ENCODE measurements at regions of chr7 and their contacts with region 1.

Region 1: GRCh38 chr7:6729492-6730342 is 23.0 kb upstream of the ZNF12 start:
- DNase-seq: peak; percentile 75
- ATAC-seq: peak; percentile 88
- H3K4me3 Mint-ChIP-seq: peak overlapping the region; percentile 88
- H3K27ac Mint-ChIP-seq: peak overlapping the region; percentile 78
- H3K4me1 Mint-ChIP-seq: peaks cover 40% of the 10 kb centered on the region
- H3K27me3 Mint-ChIP-seq: no peaks in the 10 kb centered on the region
- CTCF ChIP-seq: no peak

Region 2: GRCh38 chr7:5541087-5541992 is 1188.4 kb before region 1 on chr7:
- CTCF ChIA-PET with region 1: no interaction called
- POLR2A ChIA-PET with region 1: no interaction called
- intact Hi-C with region 1: no loop called
- DNase-seq: peak; percentile 50
- ATAC-seq: peak; percentile 73
- H3K4me3 Mint-ChIP-seq: peak overlapping the region; percentile 68
- H3K27ac Mint-ChIP-seq: peak overlapping the region; percentile 86
- H3K4me1 Mint-ChIP-seq: peaks cover 30% of the 10 kb centered on the region
- H3K27me3 Mint-ChIP-seq: no peaks in the 10 kb centered on the region
- CTCF ChIP-seq: no peak

Region 3: DNA sequence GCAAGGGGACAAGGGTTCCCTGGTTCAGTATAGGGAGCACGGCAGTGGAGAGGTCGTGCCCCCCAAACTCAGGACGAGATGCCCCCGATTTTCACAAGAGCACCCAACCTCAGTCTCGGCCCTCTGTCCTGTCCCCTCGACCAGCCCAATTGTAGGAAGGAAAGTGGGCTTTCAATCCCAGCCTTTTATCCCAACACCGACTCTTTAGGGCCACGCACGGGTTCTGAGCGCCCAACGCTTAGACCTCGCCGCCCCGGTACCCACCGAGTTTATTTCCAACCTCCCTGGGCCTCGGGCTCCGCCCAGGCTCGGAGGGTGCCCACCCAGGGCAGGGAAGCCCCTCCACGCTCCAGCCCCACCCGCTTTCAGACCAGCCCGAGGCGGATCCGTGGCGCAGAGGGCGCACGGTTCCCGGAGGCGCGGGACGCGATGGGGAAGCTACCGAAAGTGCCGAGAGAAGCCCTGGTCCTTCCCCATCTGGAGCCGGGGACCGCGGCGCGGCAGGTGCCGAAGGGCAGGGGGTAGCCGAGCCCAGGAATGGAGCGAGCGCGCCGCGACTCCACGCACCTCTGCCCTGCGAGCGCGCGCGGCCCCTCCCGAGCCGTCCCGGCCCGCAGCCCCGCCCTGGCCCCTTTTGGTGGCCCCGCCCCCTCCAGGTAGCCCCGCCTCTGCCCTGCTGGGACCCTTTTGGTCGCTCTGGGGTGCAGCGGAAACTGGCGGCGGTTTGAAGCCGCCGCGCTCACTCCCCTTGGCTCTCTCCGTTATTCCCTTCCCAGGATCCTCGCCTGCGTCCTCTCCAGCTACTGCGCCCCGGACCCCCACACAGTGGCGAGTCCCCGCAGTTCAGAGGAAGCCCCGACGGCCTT is 198.9 kb before region 1 on chr7:
- CTCF ChIA-PET with region 1: no interaction called
- POLR2A ChIA-PET with region 1: no interaction called
- intact Hi-C with region 1: loop called (anchors 5 kb)
- DNase-seq: peak; percentile 71
- ATAC-seq: peak; percentile 90
- H3K4me3 Mint-ChIP-seq: peak overlapping the region; percentile 86
- H3K27ac Mint-ChIP-seq: peak overlapping the region; percentile 10
- H3K4me1 Mint-ChIP-seq: peaks cover 22% of the 10 kb centered on the region
- H3K27me3 Mint-ChIP-seq: peaks cover 19% of the 10 kb centered on the region
- CTCF ChIP-seq: no peak

Region 4: DNA sequence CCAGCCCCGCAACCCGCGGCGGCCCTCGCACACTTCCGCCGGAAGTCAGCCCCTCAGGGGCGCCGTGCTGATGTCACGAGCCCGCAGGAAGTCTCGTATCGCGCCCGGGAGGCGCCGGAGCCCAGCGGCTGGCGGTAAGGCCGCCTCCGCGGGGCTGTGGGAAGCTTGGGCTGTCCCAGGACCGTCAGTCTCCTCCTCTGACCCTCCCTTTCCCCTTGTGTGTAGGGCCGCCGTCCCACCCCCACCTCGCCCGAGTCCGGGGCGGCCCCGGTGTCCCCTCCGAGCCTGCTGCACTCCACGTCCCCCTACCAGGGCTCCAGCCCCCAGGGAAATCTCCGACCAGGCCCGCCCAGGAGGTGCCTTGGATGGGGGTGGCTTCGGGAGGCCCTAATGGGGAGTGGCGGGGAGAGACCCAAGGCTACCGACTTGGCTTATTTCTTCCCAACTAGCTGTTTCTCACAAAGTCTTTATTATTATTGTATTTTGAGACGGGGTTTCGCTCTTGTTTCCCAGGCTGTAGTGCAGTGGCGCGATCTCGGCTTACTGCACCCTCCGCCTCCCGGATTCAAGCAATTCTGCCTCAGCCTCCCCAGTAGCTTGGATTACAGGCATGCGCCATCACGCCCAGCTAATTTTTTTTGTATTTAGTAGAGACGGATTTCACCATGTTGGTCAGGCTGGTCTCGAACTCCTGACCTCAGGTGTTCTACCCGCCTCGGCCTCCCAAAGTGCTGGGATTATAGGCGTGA is 152.2 kb before region 1 on chr7 and contains the start of gene ZDHHC4:
- CTCF ChIA-PET with region 1: no interaction called
- POLR2A ChIA-PET with region 1: no interaction called
- intact Hi-C with region 1: loop called (anchors 5 kb)
- DNase-seq: peak; percentile 86
- ATAC-seq: peak; percentile 88
- H3K4me3 Mint-ChIP-seq: peak within 1 kb of the TSS; percentile 88
- H3K27ac Mint-ChIP-seq: peak within 1 kb of the TSS; percentile 89
- H3K4me1 Mint-ChIP-seq: peaks cover 26% of the 10 kb centered on the region
- H3K27me3 Mint-ChIP-seq: no peaks in the 10 kb centered on the region
- CTCF ChIP-seq: no peak
- total RNA-seq, gene ZDHHC4: 33.2 and 37.4 TPM in 2 replicates

Measured in activated B cell treated with CpG ODN at 0.5 μM for 24 hours (primary cell).